Mammary epithelial cell (primary cell): ENCODE measurements at regions of chr11 and their contacts with region 1.

Region 1: DNA sequence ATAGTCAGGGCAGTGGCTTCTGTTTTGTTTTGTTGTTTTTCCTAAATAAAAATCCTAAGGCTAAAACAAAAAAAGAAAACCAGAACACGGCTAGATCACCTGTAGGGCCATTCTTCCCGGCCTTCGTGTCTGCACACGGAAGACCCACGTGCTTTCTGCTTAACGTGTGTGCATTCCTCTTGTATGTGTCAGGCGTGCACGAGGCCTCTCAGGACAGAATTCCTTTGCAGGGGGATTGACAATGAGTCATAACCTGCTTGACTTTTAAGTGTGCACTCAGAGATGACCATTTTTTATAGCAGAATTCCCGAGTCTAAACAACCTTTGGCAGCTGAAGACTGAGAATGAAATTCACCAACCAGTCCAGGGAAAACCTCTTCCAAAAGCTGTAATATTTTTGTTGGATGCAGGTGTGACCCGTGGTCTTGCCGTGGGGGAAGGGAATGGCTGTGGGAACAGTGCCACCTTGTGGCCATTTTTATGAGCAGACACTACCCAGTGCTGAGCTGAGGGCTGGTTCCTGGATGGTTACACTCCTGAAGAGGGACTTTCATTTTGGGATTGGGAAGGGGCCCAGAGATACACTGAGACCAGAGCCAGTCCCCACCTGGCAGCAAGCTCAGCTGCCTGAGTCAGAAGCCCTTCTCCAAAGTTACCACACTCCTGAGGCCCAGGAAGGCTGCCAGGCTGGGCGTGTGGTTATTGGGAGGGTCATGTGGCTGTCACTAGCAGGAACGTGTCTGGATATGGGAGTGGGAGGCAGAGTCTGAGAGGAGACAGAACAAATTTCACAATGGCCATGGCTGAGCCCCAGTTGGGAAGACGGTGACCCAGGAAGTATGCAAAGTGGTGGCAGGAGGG is 35.8 kb upstream of the DKK3 start:
- DNase-seq: peak; percentile 94
- H3K4me3 ChIP-seq: no peak overlapping the region
- H3K27ac ChIP-seq: peak overlapping the region; percentile 69
- H3K4me1 ChIP-seq: peaks cover 41% of the 10 kb centered on the region
- H3K27me3 ChIP-seq: no peaks in the 10 kb centered on the region
- CTCF ChIP-seq: peak; percentile 78 to 91

Region 2: GRCh38 chr11:11985016-11985715 is 59.0 kb before region 1 on chr11:
- CTCF ChIA-PET with region 1: no interaction called
- dilution Hi-C with region 1: no loop called
- in situ Hi-C with region 1: no loop called
- intact Hi-C with region 1: loop called (anchors 2 kb)
- DNase-seq: no peak
- H3K4me3 ChIP-seq: no peak overlapping the region
- H3K27ac ChIP-seq: no peak overlapping the region
- H3K4me1 ChIP-seq: peaks cover 48% of the 10 kb centered on the region
- H3K27me3 ChIP-seq: no peaks in the 10 kb centered on the region
- CTCF ChIP-seq: no peak

Region 3: GRCh38 chr11:12066799-12067508 is 22.8 kb after region 1 on chr11:
- CTCF ChIA-PET with region 1: no interaction called
- dilution Hi-C with region 1: no loop called
- in situ Hi-C with region 1: no loop called
- intact Hi-C with region 1: loop called (anchors 1 kb)
- DNase-seq: peak; percentile 49
- H3K4me3 ChIP-seq: no peak overlapping the region
- H3K27ac ChIP-seq: peak overlapping the region; percentile 91
- H3K4me1 ChIP-seq: peaks cover 41% of the 10 kb centered on the region
- H3K27me3 ChIP-seq: no peaks in the 10 kb centered on the region
- CTCF ChIP-seq: no peak

Region 4: GRCh38 chr11:12102588-12103410 is 58.6 kb after region 1 on chr11:
- CTCF ChIA-PET with region 1: no interaction called
- dilution Hi-C with region 1: no loop called
- in situ Hi-C with region 1: no loop called
- intact Hi-C with region 1: loop called (anchors 1 kb)
- DNase-seq: no peak
- H3K4me3 ChIP-seq: no peak overlapping the region
- H3K27ac ChIP-seq: no peak overlapping the region
- H3K4me1 ChIP-seq: peaks cover 4% of the 10 kb centered on the region
- H3K27me3 ChIP-seq: no peaks in the 10 kb centered on the region
- CTCF ChIP-seq: peak in 1 of 2 donors; percentile 49

Region 5: DNA sequence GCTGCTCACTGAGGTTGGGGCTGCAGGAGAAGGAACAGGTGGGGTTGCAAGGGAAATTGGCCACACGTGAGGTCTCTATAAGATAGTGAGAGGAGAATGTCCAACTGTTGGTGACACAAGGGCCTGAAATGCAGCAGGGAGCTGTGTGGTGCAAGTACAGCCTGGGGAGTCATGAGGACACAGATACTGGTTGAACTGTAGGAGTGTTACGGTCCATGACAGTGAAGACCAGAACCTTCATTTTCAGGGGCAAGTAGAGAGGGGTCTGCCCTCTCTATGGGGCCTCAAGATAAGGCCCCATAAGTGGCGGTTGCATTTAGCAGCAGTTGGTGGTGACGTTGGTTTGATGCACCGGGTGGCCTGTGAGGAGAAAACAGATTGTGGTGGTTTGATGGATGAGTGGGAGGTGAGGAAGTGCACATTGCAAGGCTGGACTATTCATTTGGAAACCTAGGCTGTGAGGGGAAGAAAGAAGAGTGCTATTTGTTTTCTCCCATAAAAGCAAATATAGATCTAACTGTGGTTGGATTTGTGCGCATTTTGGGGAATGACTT is 105.6 kb after region 1 on chr11:
- CTCF ChIA-PET with region 1: no interaction called
- dilution Hi-C with region 1: no loop called
- in situ Hi-C with region 1: no loop called
- intact Hi-C with region 1: no loop called
- DNase-seq: no peak
- H3K4me3 ChIP-seq: no peak overlapping the region
- H3K27ac ChIP-seq: no peak overlapping the region
- H3K4me1 ChIP-seq: no peaks in the 10 kb centered on the region
- H3K27me3 ChIP-seq: no peaks in the 10 kb centered on the region
- CTCF ChIP-seq: no peak

Region 6: DNA sequence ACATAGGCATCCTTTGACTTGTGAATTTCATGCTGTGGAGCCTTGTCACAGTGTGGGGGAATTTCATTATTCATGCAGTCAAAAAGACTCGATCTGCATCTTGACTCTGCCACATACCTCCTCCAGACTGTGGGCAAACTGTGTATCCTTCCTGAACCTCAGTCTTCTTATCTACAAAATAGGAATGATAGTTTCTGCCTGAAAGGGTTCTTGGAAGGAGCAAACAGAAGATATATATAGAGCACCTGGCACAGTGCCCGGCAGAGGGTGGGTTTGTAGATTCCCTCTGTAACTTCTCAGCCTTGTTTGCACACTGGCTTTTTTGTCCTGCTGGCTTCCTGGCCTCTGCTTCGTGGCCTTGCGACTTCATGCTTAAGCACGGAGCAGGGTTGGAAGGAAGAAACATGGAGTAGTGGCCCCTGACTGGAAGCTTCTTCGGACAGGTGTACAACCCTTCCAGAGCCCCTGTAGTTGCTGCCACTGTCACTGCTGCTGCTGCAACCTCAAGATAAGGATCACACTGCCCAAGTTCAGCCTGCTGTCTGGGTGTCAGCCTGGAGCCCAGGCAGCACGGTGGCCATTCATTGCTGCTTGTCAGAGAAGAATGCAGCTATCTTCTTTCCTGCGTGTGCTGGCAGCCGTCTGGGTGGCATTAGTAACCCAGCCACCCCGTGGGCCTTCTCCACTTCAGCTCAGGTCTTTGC is 172.6 kb after region 1 on chr11:
- CTCF ChIA-PET with region 1: no interaction called
- dilution Hi-C with region 1: no loop called
- in situ Hi-C with region 1: no loop called
- intact Hi-C with region 1: no loop called
- DNase-seq: no peak
- H3K4me3 ChIP-seq: no peak overlapping the region
- H3K27ac ChIP-seq: no peak overlapping the region
- H3K4me1 ChIP-seq: peaks cover 16% of the 10 kb centered on the region
- H3K27me3 ChIP-seq: no peaks in the 10 kb centered on the region
- CTCF ChIP-seq: no peak

Region 7: DNA sequence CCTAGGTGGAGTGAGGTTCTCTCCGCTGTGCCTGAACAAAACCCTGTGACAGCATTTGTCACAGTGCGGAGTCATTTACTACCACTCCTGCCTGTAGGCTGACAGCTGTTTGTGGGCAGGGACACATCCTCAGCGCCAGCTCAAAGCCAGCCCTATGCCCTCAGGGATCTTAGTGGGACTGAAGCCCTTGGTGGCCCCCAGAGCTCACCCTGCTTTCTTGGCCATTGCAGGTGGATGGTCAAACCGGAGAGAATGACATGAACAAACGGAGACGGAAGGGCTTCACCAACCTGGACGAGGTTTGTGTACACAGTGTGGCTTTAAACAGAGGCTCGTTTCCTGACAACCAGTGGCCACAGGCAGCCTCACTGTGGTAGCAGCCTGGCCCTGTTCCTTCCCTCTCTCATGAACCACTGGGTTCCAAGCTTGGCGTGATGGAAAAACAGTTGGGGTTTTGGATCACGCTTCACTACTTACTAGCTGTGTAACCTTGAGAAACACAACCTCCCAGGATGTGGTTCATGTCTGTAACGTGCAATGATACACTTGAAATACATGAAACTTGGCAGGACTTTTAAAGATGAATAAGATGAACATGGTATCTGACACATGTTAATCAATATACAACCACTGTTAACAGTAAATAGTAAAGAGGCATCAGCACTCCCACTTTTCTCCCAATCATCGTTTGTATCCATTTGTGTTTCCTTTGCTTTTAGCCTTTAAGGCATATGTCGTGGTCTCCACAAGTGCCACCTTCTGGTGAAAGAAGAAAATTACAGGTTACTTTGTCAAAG is 192.0 kb after region 1 on chr11:
- CTCF ChIA-PET with region 1: no interaction called
- dilution Hi-C with region 1: no loop called
- in situ Hi-C with region 1: loop called in 1 of 2 experiments (anchors 5 kb)
- intact Hi-C with region 1: loop called (anchors 1 kb)
- DNase-seq: peak; percentile 47
- H3K4me3 ChIP-seq: no peak overlapping the region
- H3K27ac ChIP-seq: peak overlapping the region; percentile 24
- H3K4me1 ChIP-seq: peaks cover 33% of the 10 kb centered on the region
- H3K27me3 ChIP-seq: no peaks in the 10 kb centered on the region
- CTCF ChIP-seq: peak; percentile 57 to 66

Region 8: GRCh38 chr11:12331239-12331874 is 287.2 kb after region 1 on chr11:
- CTCF ChIA-PET with region 1: no interaction called
- dilution Hi-C with region 1: no loop called
- in situ Hi-C with region 1: no loop called
- intact Hi-C with region 1: loop called (anchors 5 kb)
- DNase-seq: peak; percentile 70
- H3K4me3 ChIP-seq: no peak overlapping the region
- H3K27ac ChIP-seq: no peak overlapping the region
- H3K4me1 ChIP-seq: peaks cover 11% of the 10 kb centered on the region
- H3K27me3 ChIP-seq: no peaks in the 10 kb centered on the region
- CTCF ChIP-seq: peak; percentile 69 to 81